Dendritic cell treated with granulocyte-macrophage colony-stimulating factor and Interleukin-4, amounts not matched to agents 40 ng/mL and 50 ng/mL, for 4 days (primary cell): ENCODE measurements at regions of chr3 and their contacts with region 1.

Region 1: GRCh38 chr3:188294823-188295487 is 141.0 kb downstream of the LPP start:
- H3K4me3 Mint-ChIP-seq: no peak overlapping the region
- H3K27ac Mint-ChIP-seq: peak overlapping the region; percentile 71
- H3K4me1 Mint-ChIP-seq: peaks cover 84% of the 10 kb centered on the region
- H3K27me3 Mint-ChIP-seq: no peaks in the 10 kb centered on the region

Region 2: DNA sequence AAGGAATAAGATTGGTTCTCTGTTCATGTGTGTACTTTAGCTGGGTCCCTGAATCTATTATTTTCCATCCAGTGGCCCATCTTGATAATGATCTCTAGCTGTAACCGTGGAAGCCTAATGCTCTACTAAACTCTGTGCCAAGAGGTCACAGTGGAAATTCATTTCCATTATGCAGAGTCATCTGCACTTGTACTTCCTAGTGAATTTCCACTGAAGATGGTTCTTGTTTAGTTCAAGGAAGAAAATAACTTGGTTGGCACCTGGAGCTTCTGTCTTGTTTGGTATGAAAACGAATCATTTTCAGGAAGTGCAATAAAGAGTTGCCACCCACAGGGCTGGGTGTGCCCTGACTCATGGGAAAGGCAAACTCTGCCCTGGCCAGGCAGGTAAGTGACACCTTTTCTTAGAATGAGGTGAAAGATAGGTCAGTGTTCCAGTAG is 130.7 kb before region 1 on chr3:
- intact Hi-C with region 1: no loop called
- H3K4me3 Mint-ChIP-seq: no peak overlapping the region
- H3K27ac Mint-ChIP-seq: peak overlapping the region; percentile 52
- H3K4me1 Mint-ChIP-seq: peaks cover 67% of the 10 kb centered on the region
- H3K27me3 Mint-ChIP-seq: no peaks in the 10 kb centered on the region

Region 3: DNA sequence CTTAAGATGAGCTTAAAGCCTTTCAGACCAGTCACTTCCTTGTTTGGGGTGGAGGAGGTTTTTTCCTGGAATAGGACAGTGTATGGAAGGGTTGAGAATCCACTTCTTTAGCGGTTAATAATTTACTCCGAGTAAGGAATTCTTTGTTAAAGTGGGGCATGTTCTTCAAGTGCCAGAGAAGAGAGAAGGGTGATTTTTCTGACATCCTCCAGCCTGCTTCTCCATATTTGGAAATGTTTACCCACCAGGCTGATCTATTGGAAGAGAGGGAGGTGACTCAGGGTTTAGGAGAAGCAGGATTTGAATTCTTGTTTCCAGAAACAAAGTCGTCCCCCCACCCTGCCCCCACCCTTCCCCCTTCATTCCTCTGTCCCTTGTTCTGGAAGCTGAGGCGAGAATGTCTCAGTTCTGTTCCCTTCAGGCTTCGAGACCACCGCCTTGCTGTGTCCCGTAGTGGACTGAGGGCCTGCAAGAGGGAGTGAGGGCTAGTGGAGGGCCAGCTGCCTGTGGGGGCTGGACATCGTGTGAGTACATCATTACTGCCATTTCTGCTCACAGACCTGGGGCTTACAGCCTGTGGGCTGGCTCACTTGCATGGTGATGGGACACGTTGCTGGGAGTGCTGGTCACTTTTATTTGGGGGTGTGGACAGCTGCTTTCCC is 82.5 kb before region 1 on chr3:
- intact Hi-C with region 1: loop called (anchors 5 kb)
- H3K4me3 Mint-ChIP-seq: no peak overlapping the region
- H3K27ac Mint-ChIP-seq: peak overlapping the region; percentile 82
- H3K4me1 Mint-ChIP-seq: peaks cover 64% of the 10 kb centered on the region
- H3K27me3 Mint-ChIP-seq: no peaks in the 10 kb centered on the region

Region 4: GRCh38 chr3:188257384-188258026 is 37.5 kb before region 1 on chr3:
- intact Hi-C with region 1: loop called (anchors 5 kb)
- H3K4me3 Mint-ChIP-seq: no peak overlapping the region
- H3K27ac Mint-ChIP-seq: peak overlapping the region; percentile 76
- H3K4me1 Mint-ChIP-seq: peaks cover 33% of the 10 kb centered on the region
- H3K27me3 Mint-ChIP-seq: no peaks in the 10 kb centered on the region

Region 5: GRCh38 chr3:188458756-188459155 is 163.8 kb after region 1 on chr3:
- intact Hi-C with region 1: no loop called
- H3K4me3 Mint-ChIP-seq: no peak overlapping the region
- H3K27ac Mint-ChIP-seq: no peak overlapping the region
- H3K4me1 Mint-ChIP-seq: peaks cover 7% of the 10 kb centered on the region
- H3K27me3 Mint-ChIP-seq: no peaks in the 10 kb centered on the region